ENCODE measurements at regions of chr6 and their contacts with region 1.

Region 1: GRCh38 chr6:149648148-149649145 is at the start of gene KATNA1:
- DNase-seq: peak; percentile 89
- ATAC-seq: peak; percentile 95
- H3K4me3 Mint-ChIP-seq: peak within 1 kb of the TSS; percentile 86
- H3K27ac Mint-ChIP-seq: peak within 1 kb of the TSS; percentile 67
- H3K4me1 Mint-ChIP-seq: peaks cover 33% of the 10 kb centered on the region
- H3K27me3 Mint-ChIP-seq: no peaks in the 10 kb centered on the region
- CTCF ChIP-seq: no peak
- total RNA-seq, gene KATNA1: 17.8 and 19.2 TPM in 2 replicates

Region 2: DNA sequence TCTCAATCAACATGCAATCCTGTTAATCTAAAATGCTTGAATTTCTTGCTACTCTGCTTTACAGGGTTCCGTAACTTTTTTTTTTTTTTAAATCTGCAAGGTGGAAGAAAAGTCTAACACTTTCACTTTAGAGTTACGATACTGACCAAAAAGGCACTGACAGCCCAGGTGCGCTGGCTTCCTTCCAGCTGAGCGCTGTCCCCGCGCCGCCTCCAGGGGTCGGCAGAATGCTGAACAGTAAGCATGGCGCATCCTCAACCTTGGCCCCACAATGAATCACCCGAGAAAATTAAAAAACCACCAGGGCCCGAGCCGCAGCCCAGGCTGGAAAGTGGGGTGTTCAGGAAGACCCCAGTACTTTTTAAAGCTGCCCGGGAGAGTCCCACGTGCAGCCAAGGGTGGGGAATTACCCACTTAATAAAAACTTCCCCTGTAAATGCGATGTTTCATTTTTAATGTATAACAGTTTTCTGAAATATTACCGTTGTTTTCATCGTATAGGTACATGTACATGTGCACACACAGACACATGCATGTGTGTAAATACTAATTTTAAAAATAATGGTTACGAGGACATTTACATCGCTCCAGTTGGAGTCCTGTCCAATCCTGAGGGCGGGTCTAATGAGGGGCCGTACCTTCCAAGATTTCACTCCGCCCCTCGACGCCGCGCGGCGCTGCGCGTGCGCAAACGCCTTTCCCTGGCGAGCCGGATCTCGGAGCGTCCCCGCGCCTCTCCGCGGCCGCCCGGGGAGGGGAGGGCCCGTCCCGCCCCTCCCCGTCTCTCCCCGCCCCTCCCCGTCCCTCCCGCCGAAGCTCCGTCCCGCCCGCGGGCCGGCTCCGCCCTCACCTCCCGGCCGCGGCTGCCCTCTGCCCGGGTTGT is 82.7 kb before region 1 on chr6 and contains the start of gene GINM1:
- CTCF ChIA-PET with region 1: no interaction called
- POLR2A ChIA-PET with region 1: no interaction called
- intact Hi-C with region 1: loop called (anchors 1 kb)
- DNase-seq: peak; percentile 97
- ATAC-seq: peak; percentile 85
- H3K4me3 Mint-ChIP-seq: peak within 1 kb of the TSS; percentile 93
- H3K27ac Mint-ChIP-seq: peak within 1 kb of the TSS; percentile 92
- H3K4me1 Mint-ChIP-seq: peaks cover 22% of the 10 kb centered on the region
- H3K27me3 Mint-ChIP-seq: no peaks in the 10 kb centered on the region
- CTCF ChIP-seq: no peak
- total RNA-seq, gene GINM1: 15.4 and 18.0 TPM in 2 replicates

Region 3: DNA sequence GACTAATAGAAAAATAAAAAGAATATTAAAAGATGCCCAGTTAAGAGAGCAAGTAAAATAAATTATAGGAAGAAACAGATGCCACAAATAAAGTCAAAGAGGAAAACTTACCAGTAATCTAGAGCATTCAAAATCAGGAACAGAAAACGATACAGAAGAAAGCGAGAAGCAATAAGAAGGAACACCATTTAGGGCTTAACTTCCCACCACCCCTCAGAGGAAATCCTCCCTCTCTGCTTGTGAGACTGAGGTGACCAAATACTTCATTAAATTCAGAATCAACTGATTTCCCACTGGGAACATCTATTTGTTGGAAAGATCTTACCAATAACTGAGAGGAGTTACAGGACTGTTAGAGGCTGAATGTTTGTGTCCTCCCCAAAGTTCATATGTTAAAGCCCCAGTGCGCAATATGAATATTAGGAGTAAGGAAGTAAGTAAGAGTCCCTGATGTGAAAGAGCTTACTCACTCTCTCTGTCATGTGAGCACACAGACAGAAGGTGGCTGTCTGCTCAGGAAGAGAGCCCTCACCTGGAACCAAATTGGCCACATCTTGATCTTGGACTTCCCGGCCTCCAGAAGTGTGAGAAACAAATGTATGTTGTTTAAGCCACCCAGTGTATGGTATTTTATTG is 19.5 kb before region 1 on chr6:
- CTCF ChIA-PET with region 1: no interaction called
- POLR2A ChIA-PET with region 1: interaction called, 3 read pairs
- intact Hi-C with region 1: loop called (anchors 1 kb)
- DNase-seq: no peak
- ATAC-seq: peak; percentile 89
- H3K4me3 Mint-ChIP-seq: peak overlapping the region; percentile 50
- H3K27ac Mint-ChIP-seq: peak overlapping the region; percentile 90
- H3K4me1 Mint-ChIP-seq: peaks cover 21% of the 10 kb centered on the region
- H3K27me3 Mint-ChIP-seq: no peaks in the 10 kb centered on the region
- CTCF ChIP-seq: no peak

Region 4: GRCh38 chr6:149717588-149718458 is 69.4 kb after region 1 on chr6 and contains the start of gene LATS1:
- CTCF ChIA-PET with region 1: no interaction called
- POLR2A ChIA-PET with region 1: no interaction called
- intact Hi-C with region 1: loop called (anchors 2 kb)
- DNase-seq: peak; percentile 90
- ATAC-seq: peak; percentile 90
- H3K4me3 Mint-ChIP-seq: peak within 1 kb of the TSS; percentile 95
- H3K27ac Mint-ChIP-seq: peak within 1 kb of the TSS; percentile 96
- H3K4me1 Mint-ChIP-seq: peaks cover 29% of the 10 kb centered on the region
- H3K27me3 Mint-ChIP-seq: no peaks in the 10 kb centered on the region
- CTCF ChIP-seq: no peak
- total RNA-seq, gene LATS1: 34.6 and 42.0 TPM in 2 replicates

Region 5: GRCh38 chr6:149746147-149746946 is 97.9 kb after region 1 on chr6 and contains the start of gene NUP43:
- CTCF ChIA-PET with region 1: no interaction called
- POLR2A ChIA-PET with region 1: no interaction called
- intact Hi-C with region 1: loop called (anchors 1 kb)
- DNase-seq: peak; percentile 80
- ATAC-seq: peak; percentile 69
- H3K4me3 Mint-ChIP-seq: peak within 1 kb of the TSS; percentile 97
- H3K27ac Mint-ChIP-seq: peak within 1 kb of the TSS; percentile 89
- H3K4me1 Mint-ChIP-seq: peaks cover 29% of the 10 kb centered on the region
- H3K27me3 Mint-ChIP-seq: no peaks in the 10 kb centered on the region
- CTCF ChIP-seq: no peak
- total RNA-seq, gene NUP43: 46.9 and 50.4 TPM in 2 replicates

Measured in activated B cell treated with CpG ODN at 0.5 μM for 24 hours (primary cell).